Activated B cell treated with CpG ODN at 0.5 μM for 24 hours (primary cell): ENCODE measurements at regions of chr19 and their contacts with region 1.

Region 1: GRCh38 chr19:45770192-45771101 is 1.4 kb upstream of the SIX5 start:
- DNase-seq: peak; percentile 93
- ATAC-seq: peak; percentile 69
- H3K4me3 Mint-ChIP-seq: peak overlapping the region; percentile 89
- H3K27ac Mint-ChIP-seq: peak overlapping the region; percentile 88
- H3K4me1 Mint-ChIP-seq: peaks cover 19% of the 10 kb centered on the region
- H3K27me3 Mint-ChIP-seq: peaks cover 3% of the 10 kb centered on the region
- CTCF ChIP-seq: peak; percentile 71

Region 2: DNA sequence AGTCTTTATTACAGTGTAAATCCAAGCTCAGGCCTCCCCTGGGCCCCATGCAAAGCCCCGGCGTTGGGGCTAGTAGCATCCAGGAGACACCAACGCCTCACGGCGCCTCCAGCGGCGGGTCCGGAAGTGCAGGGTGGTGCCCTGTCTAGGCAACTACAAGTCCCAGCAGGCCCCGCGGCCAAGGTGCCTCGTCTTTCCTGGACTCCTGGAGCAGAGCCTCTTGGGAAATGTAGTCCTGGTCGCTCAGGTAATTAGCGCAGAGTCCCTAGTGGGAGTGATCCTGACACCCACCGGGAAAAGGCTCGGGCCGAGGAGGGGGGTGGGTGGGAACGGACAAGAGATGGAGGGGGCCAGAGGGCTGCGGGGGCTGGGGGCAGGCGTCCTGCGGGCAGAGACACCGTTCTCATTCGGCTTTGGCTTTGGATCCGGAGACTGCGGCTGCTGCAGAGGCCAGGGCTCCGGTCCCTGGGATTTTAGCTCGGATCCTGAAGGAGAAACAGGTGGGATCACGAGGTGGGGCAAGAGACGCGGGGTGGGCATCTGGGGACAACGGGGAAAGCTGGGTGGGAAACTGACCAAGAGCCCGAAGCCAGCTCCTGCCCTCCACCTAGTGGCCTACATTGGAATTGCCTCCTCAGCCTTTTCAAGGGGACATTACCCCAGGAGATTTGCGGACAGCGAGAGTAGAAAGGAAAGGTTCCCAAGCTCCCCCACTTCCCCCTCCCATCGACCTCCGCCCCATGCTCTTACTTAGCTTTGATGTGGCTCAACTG is 285.0 kb before region 1 on chr19:
- CTCF ChIA-PET with region 1: no interaction called
- POLR2A ChIA-PET with region 1: no interaction called
- intact Hi-C with region 1: no loop called
- DNase-seq: peak; percentile 96
- ATAC-seq: peak; percentile 99
- H3K4me3 Mint-ChIP-seq: peak overlapping the region; percentile 91
- H3K27ac Mint-ChIP-seq: peak overlapping the region; percentile 74
- H3K4me1 Mint-ChIP-seq: peaks cover 8% of the 10 kb centered on the region
- H3K27me3 Mint-ChIP-seq: peaks cover 3% of the 10 kb centered on the region
- CTCF ChIP-seq: peak; percentile 84

Region 3: GRCh38 chr19:45711851-45712698 is 58.4 kb before region 1 on chr19:
- CTCF ChIA-PET with region 1: interaction called, 4 read pairs
- POLR2A ChIA-PET with region 1: interaction called, 45 read pairs
- intact Hi-C with region 1: loop called (anchors 1 kb)
- DNase-seq: no peak
- ATAC-seq: no peak
- H3K4me3 Mint-ChIP-seq: no peak overlapping the region
- H3K27ac Mint-ChIP-seq: no peak overlapping the region
- H3K4me1 Mint-ChIP-seq: peaks cover 40% of the 10 kb centered on the region
- H3K27me3 Mint-ChIP-seq: no peaks in the 10 kb centered on the region
- CTCF ChIP-seq: no peak

Region 4: GRCh38 chr19:45730389-45731288 is 39.8 kb before region 1 on chr19 and contains the start of gene FBXO46:
- CTCF ChIA-PET with region 1: interaction called, 5 read pairs
- POLR2A ChIA-PET with region 1: interaction called, 28 read pairs
- intact Hi-C with region 1: loop called (anchors 1 kb)
- DNase-seq: peak; percentile 86
- ATAC-seq: peak; percentile 98
- H3K4me3 Mint-ChIP-seq: peak within 1 kb of the TSS; percentile 95
- H3K27ac Mint-ChIP-seq: peak within 1 kb of the TSS; percentile 93
- H3K4me1 Mint-ChIP-seq: peaks cover 25% of the 10 kb centered on the region
- H3K27me3 Mint-ChIP-seq: no peaks in the 10 kb centered on the region
- CTCF ChIP-seq: no peak
- total RNA-seq, gene FBXO46: 36.3 and 44.0 TPM in 2 replicates

Region 5: DNA sequence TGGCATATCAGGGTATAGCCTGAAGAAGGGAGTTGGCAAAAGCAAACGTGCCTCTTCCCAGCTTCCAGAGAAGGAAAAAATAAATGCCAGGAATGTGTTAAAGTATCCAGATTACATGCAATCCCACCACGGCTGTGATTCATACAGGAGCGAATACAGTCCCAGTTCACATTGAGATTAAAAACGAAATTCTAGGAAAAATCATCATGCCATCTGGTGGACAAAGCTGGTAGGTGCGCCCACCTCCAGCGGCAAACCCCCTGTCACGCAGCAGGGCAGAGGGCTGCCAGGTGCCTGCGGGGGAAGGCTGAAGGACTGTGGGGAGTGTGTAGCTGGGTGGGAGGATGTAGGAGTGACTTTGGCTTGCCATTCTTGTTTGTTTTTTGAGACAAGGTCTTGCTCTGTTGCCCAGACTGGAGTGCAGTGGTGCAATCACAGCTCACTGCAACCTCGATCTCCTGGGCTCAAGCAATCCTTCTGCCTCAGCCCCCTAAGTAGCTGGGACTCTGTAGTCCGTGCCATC is 28.6 kb after region 1 on chr19:
- CTCF ChIA-PET with region 1: interaction called, 172 read pairs
- POLR2A ChIA-PET with region 1: interaction called, 46 read pairs
- intact Hi-C with region 1: loop called (anchors 1 kb)
- DNase-seq: peak; percentile 54
- ATAC-seq: peak; percentile 97
- H3K4me3 Mint-ChIP-seq: no peak overlapping the region
- H3K27ac Mint-ChIP-seq: peak overlapping the region; percentile 60
- H3K4me1 Mint-ChIP-seq: peaks cover 6% of the 10 kb centered on the region
- H3K27me3 Mint-ChIP-seq: peaks cover 10% of the 10 kb centered on the region
- CTCF ChIP-seq: peak; percentile 89

Region 6: DNA sequence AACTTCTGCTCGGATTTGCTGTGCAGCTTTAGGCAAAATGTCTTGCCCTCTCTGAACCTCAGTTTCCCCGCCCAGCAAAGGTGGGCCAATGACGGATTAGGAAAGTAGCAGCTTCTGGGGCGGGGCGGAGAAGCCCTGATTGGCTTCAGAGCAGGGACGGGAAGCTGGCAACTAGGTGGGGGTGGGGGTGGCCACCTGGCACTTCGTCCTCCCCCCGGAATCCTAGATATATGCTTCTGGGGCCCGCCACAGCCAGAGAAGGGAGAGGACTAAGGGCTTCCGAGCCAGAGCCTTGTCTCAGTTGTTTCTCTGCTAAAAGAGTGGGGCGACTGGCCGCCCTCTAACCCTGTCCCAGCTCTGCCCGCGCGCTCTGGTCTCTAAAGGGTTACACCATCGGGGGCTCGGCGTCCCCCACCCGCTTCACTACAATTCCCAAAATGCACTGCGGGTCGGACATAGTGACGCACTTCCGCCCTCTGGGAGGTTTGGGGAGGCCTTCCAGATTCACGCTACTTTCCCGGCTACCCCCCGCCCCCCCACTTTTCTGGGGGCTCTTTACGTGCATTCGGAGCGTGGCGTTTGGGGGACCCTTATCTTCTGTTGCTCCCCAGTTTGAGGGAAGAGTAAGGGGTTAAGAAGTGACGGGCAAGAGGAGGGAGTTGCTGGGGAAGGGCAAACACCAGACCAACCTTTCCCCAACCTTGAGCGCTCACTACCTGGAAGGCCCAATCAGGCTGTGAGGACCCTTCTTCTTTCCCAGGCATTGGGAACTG is 116.2 kb after region 1 on chr19:
- CTCF ChIA-PET with region 1: interaction called, 6 read pairs
- POLR2A ChIA-PET with region 1: interaction called, 15 read pairs
- intact Hi-C with region 1: loop called (anchors 1 kb)
- DNase-seq: peak; percentile 86
- ATAC-seq: peak; percentile 65
- H3K4me3 Mint-ChIP-seq: peak overlapping the region; percentile 92
- H3K27ac Mint-ChIP-seq: peak overlapping the region; percentile 94
- H3K4me1 Mint-ChIP-seq: peaks cover 30% of the 10 kb centered on the region
- H3K27me3 Mint-ChIP-seq: no peaks in the 10 kb centered on the region
- CTCF ChIP-seq: no peak

Region 7: DNA sequence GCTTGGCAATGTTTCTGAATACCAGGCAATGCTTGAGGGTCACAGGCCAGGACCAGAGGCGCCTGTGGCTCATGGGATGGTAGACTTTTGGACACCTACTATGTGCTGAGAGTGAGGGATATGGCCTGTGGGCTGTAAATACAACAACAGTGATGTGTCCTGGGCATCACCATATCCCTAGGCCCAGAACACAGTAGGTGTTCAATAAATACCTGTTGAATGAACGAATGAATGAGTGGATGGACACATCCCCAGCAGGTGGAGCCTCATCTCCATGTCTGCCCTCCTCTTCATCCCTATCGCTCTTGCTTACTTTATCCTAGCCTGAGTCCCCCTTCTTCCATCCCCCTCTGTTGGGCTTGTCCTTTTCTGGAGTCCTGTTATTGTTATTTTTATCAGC is 160.6 kb after region 1 on chr19:
- CTCF ChIA-PET with region 1: no interaction called
- POLR2A ChIA-PET with region 1: no interaction called
- intact Hi-C with region 1: no loop called
- DNase-seq: no peak
- ATAC-seq: no peak
- H3K4me3 Mint-ChIP-seq: no peak overlapping the region
- H3K27ac Mint-ChIP-seq: no peak overlapping the region
- H3K4me1 Mint-ChIP-seq: peaks cover 9% of the 10 kb centered on the region
- H3K27me3 Mint-ChIP-seq: peaks cover 31% of the 10 kb centered on the region
- CTCF ChIP-seq: no peak

Region 8: DNA sequence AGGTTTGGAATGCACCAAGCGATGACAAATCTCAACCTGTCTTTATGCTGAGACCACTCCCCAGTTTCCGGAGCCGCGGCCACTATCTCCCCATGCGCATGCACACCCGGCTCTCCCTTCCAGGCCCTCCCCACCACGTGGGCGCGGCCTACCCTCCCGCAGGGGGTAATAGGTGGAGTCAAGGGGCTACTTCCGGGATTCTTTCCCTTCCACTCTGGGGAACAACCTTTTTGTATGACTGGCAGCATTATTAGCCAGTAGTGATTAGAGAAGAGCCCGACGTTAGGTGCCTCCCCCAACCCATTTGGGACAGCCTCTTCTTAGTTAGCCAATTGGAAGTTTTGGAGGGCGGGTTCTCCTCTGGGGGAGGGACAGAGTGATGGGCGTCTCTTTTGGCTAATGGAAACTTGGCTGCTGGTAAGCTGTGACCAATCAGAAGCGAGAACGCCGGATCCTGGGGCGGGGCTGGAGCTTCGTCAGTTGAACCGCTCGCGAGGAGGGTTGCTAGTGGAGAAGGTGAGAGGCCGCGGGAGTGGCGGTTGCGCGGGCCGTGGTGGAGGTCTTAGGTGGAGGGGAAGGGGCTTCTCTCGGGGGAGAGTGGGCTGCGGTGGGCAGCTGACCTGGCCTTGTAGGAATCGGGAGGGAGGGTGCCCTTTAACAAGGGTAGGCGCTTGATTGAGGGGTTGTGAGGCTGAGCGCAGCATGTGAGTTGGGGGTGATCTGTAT is 224.7 kb after region 1 on chr19 and contains the start of gene CCDC61:
- CTCF ChIA-PET with region 1: no interaction called
- POLR2A ChIA-PET with region 1: interaction called, 7 read pairs
- intact Hi-C with region 1: loop called (anchors 1 kb)
- DNase-seq: peak; percentile 85
- ATAC-seq: peak; percentile 94
- H3K4me3 Mint-ChIP-seq: no peak within 1 kb of the TSS
- H3K27ac Mint-ChIP-seq: no peak within 1 kb of the TSS
- H3K4me1 Mint-ChIP-seq: peaks cover 23% of the 10 kb centered on the region
- H3K27me3 Mint-ChIP-seq: peaks cover 21% of the 10 kb centered on the region
- CTCF ChIP-seq: no peak
- total RNA-seq, gene CCDC61: 24.9 and 26.9 TPM in 2 replicates